WTC11 (cell line): ENCODE measurements at regions of chr20 and their contacts with region 1.

Region 1: DNA sequence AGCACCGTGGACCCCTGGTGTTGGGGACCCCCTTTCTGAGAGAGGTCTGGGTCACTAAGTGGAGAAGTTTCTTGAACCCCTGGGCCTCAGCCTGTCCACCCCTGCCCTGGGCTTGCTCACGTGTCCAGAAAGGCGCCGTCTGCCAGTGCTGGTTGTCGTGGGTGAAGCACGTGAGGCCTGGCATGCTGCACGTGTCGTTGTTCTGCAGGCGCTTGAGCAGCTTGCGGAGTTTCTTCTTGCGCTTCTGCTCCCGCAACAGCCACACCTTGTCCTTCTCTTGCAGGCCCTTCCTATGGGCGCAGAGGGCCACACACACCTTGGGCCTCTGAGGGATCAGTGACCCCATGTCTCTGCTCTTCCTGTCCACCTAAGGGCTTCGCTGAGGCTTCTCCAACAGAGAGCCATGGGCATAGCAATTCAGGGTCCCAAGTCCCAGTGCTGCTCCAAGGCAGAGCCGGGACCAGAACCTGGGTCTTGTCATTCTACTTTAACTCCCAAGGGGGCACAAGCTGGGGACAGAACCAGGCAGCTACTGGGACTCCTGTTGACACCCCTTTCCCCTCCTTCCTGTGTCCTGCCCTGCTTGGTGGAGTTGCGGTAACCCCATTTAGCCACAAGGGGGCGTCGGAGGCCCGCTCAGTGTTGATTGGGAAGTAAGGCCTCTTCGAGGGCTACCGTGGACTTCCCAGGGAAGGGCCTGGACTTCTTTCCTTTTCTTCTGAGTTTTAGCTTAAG is 121.8 kb downstream of the SULF2 start:
- DNase-seq: peak; percentile 93
- ATAC-seq: peak; percentile 88
- H3K4me3 Mint-ChIP-seq: no peak overlapping the region
- H3K27ac Mint-ChIP-seq: peak overlapping the region; percentile 41; the same call in 1 of the 2 replicates
- H3K4me1 Mint-ChIP-seq: peaks cover 19% of the 10 kb centered on the region
- H3K27me3 Mint-ChIP-seq: no peaks in the 10 kb centered on the region
- CTCF ChIP-seq: peak; percentile 98

Region 2: DNA sequence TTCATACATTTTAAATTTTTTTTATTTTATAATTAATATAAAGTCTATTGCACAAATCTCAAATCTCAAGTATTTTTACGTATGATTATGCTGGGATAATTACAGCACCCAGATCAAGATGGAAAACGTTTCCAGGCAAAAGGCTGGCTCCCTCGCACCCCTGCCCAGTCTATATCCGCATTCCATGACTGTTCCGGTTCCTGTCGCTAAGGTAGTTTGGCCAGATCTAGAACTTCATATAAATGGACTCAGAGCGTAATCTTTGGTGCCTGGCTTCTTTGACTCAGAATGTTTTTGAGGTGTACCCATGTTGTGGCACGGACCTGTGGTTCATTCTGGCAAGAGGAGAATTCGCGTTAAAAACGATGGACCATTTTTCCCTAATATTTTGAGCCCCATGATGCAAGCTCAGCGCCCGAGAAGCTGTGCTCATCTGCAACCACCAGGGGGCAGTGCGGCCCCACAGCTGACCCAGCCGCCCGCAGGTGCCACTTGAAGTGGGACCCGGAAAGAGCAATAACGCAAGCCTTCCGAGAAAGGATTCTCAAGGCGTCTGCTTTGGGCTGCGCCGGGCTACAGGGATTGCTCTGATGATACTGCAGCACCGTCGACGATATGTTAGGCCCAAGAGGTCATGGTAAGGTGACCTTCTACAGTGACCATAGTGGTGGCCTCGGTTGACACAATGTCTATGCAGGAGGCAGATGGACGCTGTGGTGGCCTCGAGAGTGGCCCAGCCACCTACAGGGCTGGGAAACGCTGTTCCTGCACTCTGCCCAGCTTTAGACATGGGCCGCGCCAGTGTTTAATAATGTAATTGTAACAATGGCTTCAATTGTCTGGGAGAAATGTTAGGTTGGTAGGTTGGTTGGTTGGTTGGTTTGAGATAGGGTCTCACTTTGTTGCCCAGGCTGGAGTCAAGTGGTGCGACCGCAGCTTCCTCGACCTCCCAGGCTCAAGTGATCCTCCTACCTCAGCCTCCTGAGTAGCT is 467.1 kb before region 1 on chr20:
- CTCF ChIA-PET with region 1: interaction called, 10 read pairs
- POLR2A ChIA-PET with region 1: no interaction called
- DNase-seq: peak; percentile 91
- ATAC-seq: peak; percentile 87
- H3K4me3 Mint-ChIP-seq: no peak overlapping the region
- H3K27ac Mint-ChIP-seq: no peak overlapping the region
- H3K4me1 Mint-ChIP-seq: 0 out of 2 replicates have a peak, but pooled peaks cover 2% of the 10 kb centered on the region
- H3K27me3 Mint-ChIP-seq: no peaks in the 10 kb centered on the region
- CTCF ChIP-seq: peak; percentile 99

Region 3: GRCh38 chr20:47631078-47631477 is 32.4 kb before region 1 on chr20:
- CTCF ChIA-PET with region 1: no interaction called
- POLR2A ChIA-PET with region 1: no interaction called
- DNase-seq: no peak
- ATAC-seq: no peak
- H3K4me3 Mint-ChIP-seq: no peak overlapping the region
- H3K27ac Mint-ChIP-seq: no peak overlapping the region
- H3K4me1 Mint-ChIP-seq: no peaks in the 10 kb centered on the region
- H3K27me3 Mint-ChIP-seq: no peaks in the 10 kb centered on the region
- CTCF ChIP-seq: no peak

Region 4: GRCh38 chr20:47648943-47649342 is 14.6 kb before region 1 on chr20:
- CTCF ChIA-PET with region 1: interaction called, 24 read pairs
- POLR2A ChIA-PET with region 1: no interaction called
- DNase-seq: peak; percentile 44
- ATAC-seq: peak; percentile 99
- H3K4me3 Mint-ChIP-seq: 0 out of 2 replicates have a peak overlapping the region, but pooled peaks have one; percentile 1
- H3K27ac Mint-ChIP-seq: peak overlapping the region; percentile 98
- H3K4me1 Mint-ChIP-seq: peaks cover 59% of the 10 kb centered on the region
- H3K27me3 Mint-ChIP-seq: no peaks in the 10 kb centered on the region
- CTCF ChIP-seq: no peak

Region 5: DNA sequence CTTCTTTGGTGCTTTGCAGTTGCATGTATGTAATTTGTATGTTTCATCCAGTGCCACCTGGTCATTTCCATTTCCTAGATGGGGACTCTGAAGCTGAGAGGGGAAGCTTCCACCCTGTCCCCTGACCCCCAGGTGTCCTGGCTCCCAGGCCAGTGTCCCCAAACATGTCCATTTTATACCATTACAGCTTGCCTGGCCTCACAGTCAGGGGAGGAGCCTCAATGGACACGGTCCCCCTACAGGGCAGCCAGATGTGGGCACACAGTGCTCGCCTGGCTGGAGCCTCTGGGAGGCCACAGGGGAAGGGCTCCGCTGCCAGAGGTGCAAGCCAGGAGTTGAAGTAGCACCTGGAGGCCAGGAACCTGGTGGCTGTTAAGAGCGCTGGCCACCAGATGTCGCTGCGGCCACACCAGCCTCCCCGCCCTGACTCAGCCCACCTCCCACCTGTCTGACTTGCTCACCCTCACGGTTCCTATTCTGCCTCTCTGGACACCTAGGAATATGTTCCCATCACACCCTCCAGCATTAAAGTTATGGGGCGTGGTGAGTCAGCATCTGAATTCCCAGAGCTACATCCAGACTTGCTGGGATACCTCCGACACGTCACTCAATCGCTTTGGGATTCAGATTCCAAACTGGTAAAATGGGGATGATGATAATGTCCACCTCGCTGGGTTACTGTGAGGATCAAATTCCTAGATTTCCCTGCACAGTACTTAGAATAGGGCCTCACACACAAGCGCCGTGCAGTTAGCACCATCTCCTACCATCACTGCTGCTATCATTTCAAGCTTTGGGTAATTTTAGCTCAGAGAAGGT is 14.3 kb after region 1 on chr20:
- CTCF ChIA-PET with region 1: interaction called, 53 read pairs
- POLR2A ChIA-PET with region 1: no interaction called
- DNase-seq: peak; percentile 85
- ATAC-seq: peak; percentile 76
- H3K4me3 Mint-ChIP-seq: no peak overlapping the region
- H3K27ac Mint-ChIP-seq: no peak overlapping the region
- H3K4me1 Mint-ChIP-seq: peaks cover 13% of the 10 kb centered on the region
- H3K27me3 Mint-ChIP-seq: no peaks in the 10 kb centered on the region
- CTCF ChIP-seq: peak; percentile 89

Region 6: GRCh38 chr20:47693692-47694354 is 30.3 kb after region 1 on chr20:
- CTCF ChIA-PET with region 1: interaction called, 10 read pairs
- POLR2A ChIA-PET with region 1: no interaction called
- DNase-seq: no peak
- ATAC-seq: no peak
- H3K4me3 Mint-ChIP-seq: no peak overlapping the region
- H3K27ac Mint-ChIP-seq: no peak overlapping the region
- H3K4me1 Mint-ChIP-seq: peaks cover 15% of the 10 kb centered on the region
- H3K27me3 Mint-ChIP-seq: peaks cover 2% of the 10 kb centered on the region
- CTCF ChIP-seq: no peak

Region 7: GRCh38 chr20:47713878-47714450 is 50.5 kb after region 1 on chr20:
- CTCF ChIA-PET with region 1: interaction called, 20 read pairs
- POLR2A ChIA-PET with region 1: no interaction called
- DNase-seq: no peak
- ATAC-seq: no peak
- H3K4me3 Mint-ChIP-seq: no peak overlapping the region
- H3K27ac Mint-ChIP-seq: no peak overlapping the region
- H3K4me1 Mint-ChIP-seq: peaks cover 13% of the 10 kb centered on the region; the same call in 1 of the 2 replicates
- H3K27me3 Mint-ChIP-seq: no peaks in the 10 kb centered on the region
- CTCF ChIP-seq: no peak

Region 8: DNA sequence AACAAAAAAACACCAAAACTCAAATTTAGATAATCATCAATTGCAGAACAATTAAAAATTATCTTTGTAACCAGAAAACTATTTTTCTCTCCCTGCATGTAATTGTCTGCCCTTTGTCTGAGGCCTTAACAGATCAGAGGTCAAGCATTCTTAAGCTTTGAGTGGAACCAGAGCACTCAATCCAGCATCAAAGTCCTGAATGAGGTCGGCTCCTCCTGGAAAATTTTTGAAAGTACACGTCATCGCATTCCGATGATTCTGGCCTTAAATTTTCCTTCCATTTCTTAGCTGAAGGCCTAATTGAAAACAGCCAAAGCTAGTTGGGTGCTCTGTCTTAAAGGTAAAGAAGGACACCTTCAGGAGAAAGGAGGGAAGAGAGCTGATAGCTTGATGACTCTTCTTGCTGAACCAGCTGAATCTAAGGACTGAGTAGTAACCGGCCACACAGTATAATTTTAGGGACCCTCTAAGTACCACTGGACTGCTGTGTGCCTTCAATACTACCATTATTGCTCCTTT is 632.0 kb after region 1 on chr20:
- CTCF ChIA-PET with region 1: interaction called, 11 read pairs
- POLR2A ChIA-PET with region 1: no interaction called
- DNase-seq: no peak
- ATAC-seq: peak; percentile 79
- H3K4me3 Mint-ChIP-seq: no peak overlapping the region
- H3K27ac Mint-ChIP-seq: peak overlapping the region; percentile 89
- H3K4me1 Mint-ChIP-seq: peaks cover 56% of the 10 kb centered on the region
- H3K27me3 Mint-ChIP-seq: no peaks in the 10 kb centered on the region
- CTCF ChIP-seq: no peak